GM10248 (cell line): ENCODE measurements at regions of chr18 and their contacts with region 1.

Region 1: GRCh38 chr18:30302181-30302580 is 740.4 kb downstream of the DSC3 start:
- DNase-seq: no peak
- CTCF ChIP-seq: no peak

Region 2: GRCh38 chr18:30254331-30254730 is 47.9 kb before region 1 on chr18:
- CTCF ChIA-PET with region 1: no interaction called
- POLR2A ChIA-PET with region 1: no interaction called
- DNase-seq: no peak
- CTCF ChIP-seq: no peak

Region 3: DNA sequence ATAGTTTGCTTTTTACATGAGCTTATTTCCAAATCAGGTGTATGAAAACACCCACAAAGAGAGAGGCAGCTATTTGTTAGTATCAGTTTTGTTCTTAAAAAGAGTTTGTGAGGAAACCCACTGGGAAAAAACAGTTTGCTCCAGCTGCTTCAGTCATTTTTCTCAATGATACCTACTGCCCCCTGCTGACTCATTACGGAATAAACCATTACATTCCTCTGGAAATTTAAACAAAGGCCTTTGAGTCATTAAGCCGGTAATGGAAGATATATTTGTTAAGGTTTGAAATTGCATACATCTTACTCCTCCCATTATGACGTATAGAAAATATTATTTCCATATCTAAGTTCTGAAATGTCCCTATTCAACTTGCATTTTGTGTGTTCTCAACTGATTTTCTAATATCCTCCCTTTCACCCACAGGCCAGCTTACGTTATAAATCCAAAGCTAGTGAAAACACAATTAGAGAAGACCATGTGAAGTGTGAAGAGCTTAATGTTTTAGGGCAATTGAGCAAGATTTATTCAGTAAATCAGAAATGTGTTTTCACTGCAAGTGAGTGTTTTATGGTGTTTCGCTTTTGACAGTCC is 21.2 kb before region 1 on chr18:
- CTCF ChIA-PET with region 1: interaction called, 11 read pairs
- POLR2A ChIA-PET with region 1: no interaction called
- DNase-seq: no peak
- CTCF ChIP-seq: peak; percentile 54

Region 4: GRCh38 chr18:30568333-30568732 is 266.2 kb after region 1 on chr18:
- CTCF ChIA-PET with region 1: no interaction called
- POLR2A ChIA-PET with region 1: no interaction called
- DNase-seq: no peak
- CTCF ChIP-seq: no peak

Region 5: GRCh38 chr18:30696201-30696600 is 394.0 kb after region 1 on chr18:
- CTCF ChIA-PET with region 1: no interaction called
- POLR2A ChIA-PET with region 1: no interaction called
- DNase-seq: no peak
- CTCF ChIP-seq: no peak